CD8-positive, alpha-beta T cell (primary cell): ENCODE measurements at regions of chr13 and their contacts with region 1.

Region 1: DNA sequence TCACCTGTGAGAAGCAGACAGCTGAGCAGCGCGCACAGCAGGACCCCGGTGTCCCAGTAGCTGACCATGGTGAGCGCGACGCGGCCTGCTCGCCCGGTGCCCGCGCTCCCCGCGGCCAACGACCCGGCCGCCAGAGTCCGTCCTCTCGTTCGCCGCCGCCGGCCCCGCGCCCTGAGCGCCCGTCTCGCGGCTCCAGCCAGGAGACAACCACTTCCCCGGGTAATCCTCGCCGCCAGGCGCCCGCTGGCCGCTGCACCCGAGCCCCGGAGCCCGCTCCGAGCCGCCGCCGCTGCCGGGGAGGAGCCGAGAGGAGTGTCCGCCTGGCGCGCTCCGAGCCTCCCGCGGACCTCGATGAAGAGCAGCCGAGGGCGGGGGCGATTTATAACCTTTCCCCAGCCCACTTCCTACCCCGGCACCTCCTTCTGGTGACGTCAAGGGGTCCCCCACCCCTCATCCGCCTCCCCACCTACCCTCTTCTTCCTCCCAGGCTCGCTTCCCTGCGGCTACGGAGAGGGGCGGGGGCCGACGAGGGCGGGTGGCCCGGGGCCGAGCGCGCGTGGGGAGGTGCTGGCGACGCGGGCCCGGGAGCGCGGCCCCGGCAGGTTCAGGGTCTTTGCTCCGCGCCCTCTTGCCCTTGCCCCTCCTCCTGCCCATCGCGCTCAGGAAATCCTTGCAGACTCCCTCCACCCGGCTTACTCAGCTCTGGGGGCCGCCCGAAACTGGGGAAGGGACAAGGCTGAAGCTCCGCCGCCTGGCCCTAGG is at the start of gene FLT1:
- DNase-seq: peak in 5 of 9 experiments; percentile 27 to 62 (median 54)
- ATAC-seq: peak; percentile 21
- H3K4me3 ChIP-seq: peak within 1 kb of the TSS; percentile 45 to 46
- H3K4me3 Mint-ChIP-seq: peak within 1 kb of the TSS; percentile 62
- H3K27ac ChIP-seq: no peak within 1 kb of the TSS
- H3K27ac Mint-ChIP-seq: peak within 1 kb of the TSS; percentile 8
- H3K4me1 ChIP-seq: peaks cover 26% of the 10 kb centered on the region
- H3K4me1 Mint-ChIP-seq: peaks cover 38% of the 10 kb centered on the region
- H3K27me3 ChIP-seq: peaks cover 5 to 6% of the 10 kb centered on the region in 2 experiments
- H3K27me3 Mint-ChIP-seq: peaks cover 22% of the 10 kb centered on the region
- CTCF ChIP-seq: no peak
- total RNA-seq, gene FLT1: 1.4 to 1.5 TPM

Region 2: DNA sequence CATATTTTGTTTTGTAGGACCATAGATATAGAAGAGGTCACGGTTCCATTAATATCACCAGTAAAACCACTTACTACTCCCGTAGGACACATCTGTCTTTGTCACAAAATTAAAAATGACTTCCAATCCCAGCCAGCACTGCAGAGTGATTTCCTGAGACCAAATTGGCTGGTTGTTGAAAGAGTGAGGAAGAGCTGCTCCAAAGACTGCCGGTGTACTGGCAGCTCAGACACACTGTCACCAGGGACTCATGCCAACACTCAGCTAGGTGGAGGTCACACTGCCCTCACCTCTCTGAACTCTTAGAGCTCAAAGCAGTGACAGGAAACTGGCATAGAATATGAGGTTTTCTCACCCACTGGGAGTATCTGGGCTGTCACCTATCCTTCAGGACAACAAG is 52.1 kb before region 1 on chr13:
- CTCF ChIA-PET with region 1: no interaction called
- POLR2A ChIA-PET with region 1: no interaction called
- intact Hi-C with region 1: no loop called
- DNase-seq: no peak
- ATAC-seq: no peak
- H3K4me3 ChIP-seq: no peak overlapping the region
- H3K4me3 Mint-ChIP-seq: no peak overlapping the region
- H3K27ac ChIP-seq: no peak overlapping the region
- H3K27ac Mint-ChIP-seq: no peak overlapping the region
- H3K4me1 ChIP-seq: no peaks in the 10 kb centered on the region
- H3K4me1 Mint-ChIP-seq: no peaks in the 10 kb centered on the region
- H3K27me3 ChIP-seq: no peaks in the 10 kb centered on the region
- H3K27me3 Mint-ChIP-seq: peaks cover 11% of the 10 kb centered on the region
- CTCF ChIP-seq: no peak

Region 3: DNA sequence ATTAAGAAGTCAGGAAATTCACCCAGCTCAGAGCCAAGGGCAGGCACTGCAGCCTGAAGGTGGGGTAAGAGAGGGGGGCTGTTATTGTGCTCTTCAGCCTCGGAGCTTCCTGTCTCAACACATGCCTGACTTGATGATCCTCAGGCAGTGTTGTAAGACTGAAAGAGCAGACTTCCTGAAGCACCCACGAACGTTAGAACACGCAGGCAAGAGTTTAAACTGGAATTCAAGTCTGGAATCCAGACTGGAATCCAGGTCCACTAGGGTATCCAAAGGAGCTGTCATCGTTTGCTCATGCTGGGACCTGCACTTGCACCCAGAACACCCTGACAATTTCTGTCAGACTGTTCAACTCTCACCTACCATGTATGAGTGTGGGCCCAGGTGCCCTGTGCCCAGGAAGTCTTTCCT is 10.7 kb after region 1 on chr13:
- CTCF ChIA-PET with region 1: interaction called, 3 read pairs
- POLR2A ChIA-PET with region 1: no interaction called
- intact Hi-C with region 1: loop called in 1 of 2 experiments (anchors 1 kb)
- DNase-seq: peak in 4 of 9 experiments; percentile 11 to 57 (median 38)
- ATAC-seq: peak; percentile 90
- H3K4me3 ChIP-seq: no peak overlapping the region
- H3K4me3 Mint-ChIP-seq: peak overlapping the region; percentile 26
- H3K27ac ChIP-seq: no peak overlapping the region
- H3K27ac Mint-ChIP-seq: peak overlapping the region; percentile 72
- H3K4me1 ChIP-seq: peaks cover 10% of the 10 kb centered on the region
- H3K4me1 Mint-ChIP-seq: peaks cover 12% of the 10 kb centered on the region
- H3K27me3 ChIP-seq: no peaks in the 10 kb centered on the region
- H3K27me3 Mint-ChIP-seq: no peaks in the 10 kb centered on the region
- CTCF ChIP-seq: no peak